GM23248 (cell line): ENCODE measurements at regions of chr17 and their contacts with region 1.

Region 1: DNA sequence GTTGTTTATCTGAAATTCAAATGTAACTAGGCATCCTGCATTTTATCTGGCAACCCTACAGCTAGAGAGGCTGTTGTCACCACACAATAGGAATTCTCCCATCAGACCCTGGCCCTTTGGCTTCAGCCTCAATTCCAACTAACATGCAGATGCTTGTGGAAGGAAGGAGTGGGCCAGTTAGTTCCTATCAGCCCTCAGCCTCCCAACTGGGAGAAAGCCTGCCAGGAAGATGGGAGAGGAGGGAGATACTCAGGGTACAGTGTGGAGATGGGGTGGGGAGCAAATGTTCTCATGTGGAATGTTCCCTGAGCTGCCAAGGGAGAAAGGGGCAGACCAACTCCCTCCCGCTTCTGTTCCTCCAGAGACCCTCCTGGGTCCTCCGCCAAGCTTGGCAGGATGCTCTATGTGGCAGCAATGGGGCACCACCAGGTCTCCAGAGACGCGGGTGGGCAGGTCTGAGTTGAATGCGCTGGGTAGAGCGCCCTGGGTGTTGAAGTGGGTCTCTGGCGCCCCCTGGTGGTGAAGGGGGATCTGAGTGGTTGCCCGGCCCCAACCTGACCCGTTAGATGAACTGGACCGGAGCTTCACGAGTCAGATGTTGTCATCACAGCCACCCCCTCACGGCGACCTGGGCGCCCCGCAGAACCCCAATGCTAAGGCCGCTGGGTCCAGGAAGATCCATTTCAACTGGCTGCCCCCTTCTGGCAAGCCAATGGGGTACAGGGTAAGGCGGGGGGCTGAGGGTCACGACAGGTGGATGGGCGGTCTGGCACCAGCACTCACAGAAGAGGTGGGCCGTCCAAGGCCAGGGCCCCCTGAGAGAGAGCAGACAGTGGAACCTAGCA is 15.2 kb downstream of the GALK1 start:
- DNase-seq: peak; percentile 89
- H3K4me3 ChIP-seq: no peak overlapping the region
- H3K27ac ChIP-seq: no peak overlapping the region
- H3K4me1 ChIP-seq: peaks cover 3% of the 10 kb centered on the region; the same call in 1 of the 2 replicates
- H3K27me3 ChIP-seq: no peaks in the 10 kb centered on the region

Region 2: DNA sequence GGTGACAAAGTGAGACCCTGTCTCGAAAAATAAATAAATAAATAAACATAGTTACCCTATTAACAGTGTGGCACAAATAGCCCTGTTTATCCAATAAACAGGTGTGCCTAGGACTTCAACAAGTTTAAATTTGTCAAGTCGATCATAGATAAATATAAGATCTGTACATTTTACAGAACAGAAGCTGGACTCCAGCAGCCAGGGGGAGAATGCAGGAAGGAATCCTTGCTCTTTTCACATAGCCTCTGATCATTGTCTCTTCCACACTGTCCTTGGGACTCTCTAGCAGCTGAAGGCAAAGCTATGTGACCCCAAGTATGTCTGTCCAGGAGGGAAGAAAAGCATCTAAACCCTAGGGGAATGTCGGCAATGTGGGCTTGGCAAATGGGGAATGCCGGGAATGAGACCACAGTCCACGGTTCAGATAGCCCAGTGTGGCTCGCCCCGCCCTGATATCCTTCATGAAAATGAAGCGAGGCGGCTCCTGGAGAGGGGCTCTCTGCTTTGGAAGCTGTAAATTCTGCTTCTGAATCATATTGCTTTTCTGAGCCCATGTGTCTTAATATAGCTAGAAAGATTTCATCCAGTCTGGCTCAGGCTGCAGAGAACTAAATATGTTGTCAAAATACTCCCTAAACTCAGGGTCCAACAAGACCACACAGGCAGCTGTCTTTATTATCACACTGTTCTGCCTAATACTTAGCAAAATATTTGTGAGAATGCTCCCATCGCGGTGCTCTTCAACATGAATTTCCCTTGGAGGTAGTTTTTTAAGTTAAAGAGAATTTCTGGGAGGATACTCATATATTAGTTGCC is 319.4 kb before region 1 on chr17:
- in situ Hi-C with region 1: loop called (anchors 25 kb)
- DNase-seq: no peak
- H3K4me3 ChIP-seq: no peak overlapping the region
- H3K27ac ChIP-seq: no peak overlapping the region
- H3K4me1 ChIP-seq: peaks cover 11% of the 10 kb centered on the region
- H3K27me3 ChIP-seq: no peaks in the 10 kb centered on the region

Region 3: GRCh38 chr17:75539967-75540711 is 209.6 kb before region 1 on chr17:
- in situ Hi-C with region 1: no loop called
- DNase-seq: no peak
- H3K4me3 ChIP-seq: no peak overlapping the region
- H3K27ac ChIP-seq: no peak overlapping the region
- H3K4me1 ChIP-seq: no peaks in the 10 kb centered on the region
- H3K27me3 ChIP-seq: no peaks in the 10 kb centered on the region; the same call in 1 of the 2 replicates

Region 4: GRCh38 chr17:75619506-75620431 is 130.0 kb before region 1 on chr17:
- in situ Hi-C with region 1: loop called (anchors 10 kb)
- DNase-seq: peak; percentile 50
- H3K4me3 ChIP-seq: no peak overlapping the region
- H3K27ac ChIP-seq: no peak overlapping the region
- H3K4me1 ChIP-seq: no peaks in the 10 kb centered on the region
- H3K27me3 ChIP-seq: no peaks in the 10 kb centered on the region

Region 5: DNA sequence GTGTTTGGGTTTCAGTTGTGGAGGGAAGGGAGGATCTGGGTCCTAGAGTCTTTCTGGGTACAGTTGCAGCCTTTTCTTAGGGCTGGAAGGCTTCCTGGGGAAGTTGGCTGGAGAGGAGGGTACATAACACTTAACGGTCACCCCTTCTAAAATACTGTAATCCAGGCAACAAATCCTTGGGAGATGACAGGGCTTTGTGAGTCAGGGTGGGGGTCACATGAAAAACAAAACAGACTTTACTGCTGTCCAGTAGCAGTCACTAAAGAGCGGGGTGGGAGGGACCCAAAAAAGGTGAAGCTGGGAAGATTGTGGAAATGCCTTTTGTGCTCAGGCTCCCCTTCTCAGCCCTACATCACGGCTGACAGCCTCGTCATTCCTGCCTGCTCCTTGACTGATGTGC is 76.3 kb before region 1 on chr17:
- in situ Hi-C with region 1: loop called (anchors 5 kb)
- DNase-seq: no peak
- H3K4me3 ChIP-seq: no peak overlapping the region
- H3K27ac ChIP-seq: no peak overlapping the region
- H3K4me1 ChIP-seq: peaks cover 4% of the 10 kb centered on the region
- H3K27me3 ChIP-seq: no peaks in the 10 kb centered on the region

Region 6: GRCh38 chr17:76039121-76039520 is 289.4 kb after region 1 on chr17:
- in situ Hi-C with region 1: no loop called
- DNase-seq: no peak
- H3K4me3 ChIP-seq: no peak overlapping the region
- H3K27ac ChIP-seq: no peak overlapping the region
- H3K4me1 ChIP-seq: no peaks in the 10 kb centered on the region
- H3K27me3 ChIP-seq: no peaks in the 10 kb centered on the region